Activated T-helper 2 cell treated with anti-CD3 and anti-CD28 coated beads, Interferon-gamma antibody, Interleukin-2, Interleukin-4, amounts not matched to agents 10 μg/mL and 5 μg/mL and 100 μg/mL, durations not matched to agents 14 hours and 24 hours and 36 hours (primary cell): ENCODE measurements at regions of chrX and their contacts with region 1.

Region 1: GRCh38 chrX:63560601-63561218 is 209.6 kb upstream of the SPIN4 start:
- DNase-seq: peak; percentile 45
- H3K4me3 Mint-ChIP-seq: peak overlapping the region; percentile 98
- H3K27ac Mint-ChIP-seq: peak overlapping the region; percentile 84
- H3K4me1 Mint-ChIP-seq: peaks cover 7% of the 10 kb centered on the region
- H3K27me3 Mint-ChIP-seq: no peaks in the 10 kb centered on the region

Region 2: GRCh38 chrX:63350941-63351616 is 209.6 kb before region 1 on chrX and contains the start of gene SPIN4:
- intact Hi-C with region 1: loop called (anchors 5 kb)
- DNase-seq: peak; percentile 66
- H3K4me3 Mint-ChIP-seq: peak within 1 kb of the TSS; percentile 92
- H3K27ac Mint-ChIP-seq: peak within 1 kb of the TSS; percentile 85
- H3K4me1 Mint-ChIP-seq: peaks cover 30% of the 10 kb centered on the region
- H3K27me3 Mint-ChIP-seq: no peaks in the 10 kb centered on the region
- total RNA-seq, gene SPIN4: 7.5 and 8.2 TPM in 2 replicates